ENCODE measurements at regions of chr10 and their contacts with region 1.

Region 1: DNA sequence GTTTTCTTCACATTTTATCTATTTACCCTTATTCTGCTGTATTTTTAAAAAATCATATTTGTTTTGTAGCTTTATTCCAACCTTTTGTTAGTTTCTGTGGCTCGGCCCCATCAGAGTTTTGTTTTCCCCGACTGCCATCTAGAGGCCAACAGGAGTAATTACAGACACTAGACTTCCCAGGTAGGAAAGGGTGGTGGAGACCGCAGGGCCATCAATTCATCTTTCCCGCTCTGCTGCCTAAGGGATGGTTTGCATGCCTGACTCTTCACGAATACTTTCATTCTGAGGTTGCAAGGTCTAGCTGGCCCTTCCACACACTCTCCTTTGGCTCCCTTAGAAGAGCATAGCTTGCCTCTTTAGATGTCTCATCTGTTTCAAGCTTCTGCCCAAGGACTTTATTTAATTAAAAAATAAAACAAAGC is 38.3 kb downstream of the LYZL2 start:
- DNase-seq: peak; percentile 39
- H3K4me3 Mint-ChIP-seq: no peak overlapping the region
- H3K27ac Mint-ChIP-seq: no peak overlapping the region
- H3K4me1 Mint-ChIP-seq: peaks cover 4% of the 10 kb centered on the region
- H3K27me3 Mint-ChIP-seq: peaks cover 13% of the 10 kb centered on the region

Region 2: DNA sequence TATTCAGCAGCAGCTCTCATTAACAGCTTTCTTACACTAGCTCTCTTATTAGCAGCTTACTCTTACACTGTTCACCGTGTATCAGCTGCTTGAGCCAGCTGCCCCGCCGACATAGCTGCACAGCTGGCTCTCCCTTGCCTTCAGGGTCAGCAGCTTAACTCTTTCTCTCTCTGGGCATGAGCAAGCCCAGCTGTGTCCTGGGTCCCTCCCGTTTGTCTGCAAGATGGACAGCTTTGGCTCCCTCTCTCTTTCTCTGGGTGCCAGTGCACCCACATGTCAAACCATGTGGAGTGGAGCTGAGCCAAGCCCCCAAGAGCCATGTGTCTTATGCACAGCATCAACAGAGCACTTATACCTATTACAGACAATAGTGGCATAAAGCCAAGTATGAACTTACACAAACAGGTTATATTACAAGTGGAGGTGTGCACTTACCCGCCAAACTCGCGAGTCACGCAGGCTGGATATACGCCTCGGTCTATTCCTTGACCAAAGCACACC is 206.5 kb before region 1 on chr10:
- CTCF ChIA-PET with region 1: interaction called, 125 read pairs
- POLR2A ChIA-PET with region 1: no interaction called
- DNase-seq: no peak
- H3K4me3 Mint-ChIP-seq: no peak overlapping the region
- H3K27ac Mint-ChIP-seq: no peak overlapping the region
- H3K4me1 Mint-ChIP-seq: no peaks in the 10 kb centered on the region
- H3K27me3 Mint-ChIP-seq: peaks cover 46% of the 10 kb centered on the region

Region 3: DNA sequence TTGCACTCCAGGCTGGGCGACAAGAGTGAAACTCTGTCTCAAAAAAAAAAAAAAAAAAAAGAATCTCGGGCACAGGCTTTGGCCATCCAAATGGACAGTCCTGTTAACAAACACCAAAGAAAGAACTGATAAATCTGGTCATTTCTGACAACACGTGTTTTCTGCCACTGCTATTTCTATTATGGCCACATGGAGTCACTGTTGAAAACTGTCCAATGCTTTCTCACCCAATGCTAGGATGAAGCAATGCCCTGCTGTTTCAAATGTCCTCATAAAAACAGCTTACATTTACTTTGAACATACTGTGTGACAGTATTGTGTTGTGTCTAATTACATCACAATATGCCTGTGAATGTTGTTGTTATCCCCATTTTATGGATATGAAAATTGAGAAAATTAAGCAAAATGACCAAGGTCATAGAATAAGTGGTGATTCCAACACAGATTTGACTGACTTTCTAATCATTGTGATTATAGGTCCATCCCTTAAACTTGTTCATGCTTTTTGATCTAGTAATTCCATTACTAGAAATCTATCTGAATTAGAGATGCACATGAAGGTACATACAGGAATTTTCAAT is 177.2 kb before region 1 on chr10:
- CTCF ChIA-PET with region 1: interaction called, 12 read pairs
- POLR2A ChIA-PET with region 1: no interaction called
- DNase-seq: no peak
- H3K4me3 Mint-ChIP-seq: no peak overlapping the region
- H3K27ac Mint-ChIP-seq: no peak overlapping the region
- H3K4me1 Mint-ChIP-seq: peaks cover 42% of the 10 kb centered on the region
- H3K27me3 Mint-ChIP-seq: no peaks in the 10 kb centered on the region

Region 4: DNA sequence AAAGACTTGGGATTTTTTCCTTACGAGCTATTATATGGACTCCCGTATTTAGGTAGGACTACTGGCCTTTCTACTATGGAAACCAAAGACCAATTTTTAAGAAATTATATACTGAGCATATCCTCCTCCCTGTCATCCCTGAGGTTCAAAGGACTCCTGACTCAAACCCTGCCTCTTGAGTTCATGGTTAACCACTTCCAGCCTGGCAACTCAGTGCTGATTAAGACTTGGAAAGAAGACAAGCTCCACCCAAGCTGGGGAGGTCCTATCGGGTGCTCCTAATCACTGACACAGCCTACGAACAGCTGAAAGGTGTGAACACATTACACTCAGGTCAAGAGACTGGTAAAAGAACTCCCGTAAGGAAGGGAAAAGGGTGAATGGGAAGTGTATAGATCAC is 28.5 kb before region 1 on chr10:
- CTCF ChIA-PET with region 1: interaction called, 12 read pairs
- POLR2A ChIA-PET with region 1: no interaction called
- DNase-seq: peak; percentile 66
- H3K4me3 Mint-ChIP-seq: no peak overlapping the region
- H3K27ac Mint-ChIP-seq: no peak overlapping the region
- H3K4me1 Mint-ChIP-seq: peaks cover 19% of the 10 kb centered on the region
- H3K27me3 Mint-ChIP-seq: peaks cover 29% of the 10 kb centered on the region

Region 5: GRCh38 chr10:30639946-30640786 is 48.9 kb after region 1 on chr10:
- CTCF ChIA-PET with region 1: interaction called, 20 read pairs
- POLR2A ChIA-PET with region 1: no interaction called
- DNase-seq: no peak
- H3K4me3 Mint-ChIP-seq: no peak overlapping the region
- H3K27ac Mint-ChIP-seq: no peak overlapping the region
- H3K4me1 Mint-ChIP-seq: peaks cover 20% of the 10 kb centered on the region
- H3K27me3 Mint-ChIP-seq: peaks cover 36% of the 10 kb centered on the region

Region 6: DNA sequence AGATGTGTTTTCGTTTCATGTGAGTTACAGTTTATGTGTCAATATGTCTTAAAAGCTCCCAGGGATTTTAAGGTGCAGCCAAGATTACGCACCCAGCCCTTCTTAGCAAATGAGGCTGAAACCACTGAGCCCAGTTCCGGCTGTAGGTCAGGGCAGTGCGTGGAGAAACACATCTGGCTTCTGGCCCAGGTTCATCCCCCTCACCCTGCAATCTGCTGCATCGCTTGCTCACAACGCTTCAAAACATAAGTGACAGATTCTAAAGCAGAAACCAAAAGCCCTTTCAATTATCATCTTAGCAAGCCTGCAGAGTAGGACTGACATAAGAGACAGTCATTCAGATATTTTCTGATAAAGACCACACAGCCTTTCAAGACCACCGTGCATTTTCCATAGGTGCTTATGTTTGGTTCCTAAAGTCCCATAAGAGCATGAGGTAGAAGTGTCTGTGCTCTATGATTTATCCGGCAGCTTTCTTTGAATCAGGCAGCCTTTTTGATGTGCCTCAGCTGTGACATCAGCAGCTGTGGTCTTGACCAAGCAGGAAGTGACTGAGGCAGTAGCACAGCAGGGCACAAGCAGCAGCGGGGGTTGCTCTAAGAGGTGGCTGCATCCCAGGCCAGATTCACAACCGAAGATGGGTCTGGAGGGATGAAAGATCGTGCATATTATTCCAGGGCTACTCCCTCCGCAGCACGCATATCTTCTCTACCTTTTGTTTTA is 110.4 kb after region 1 on chr10:
- CTCF ChIA-PET with region 1: no interaction called
- POLR2A ChIA-PET with region 1: no interaction called
- DNase-seq: peak; percentile 85
- H3K4me3 Mint-ChIP-seq: peak overlapping the region; percentile 82
- H3K27ac Mint-ChIP-seq: peak overlapping the region; percentile 99
- H3K4me1 Mint-ChIP-seq: peaks cover 89% of the 10 kb centered on the region
- H3K27me3 Mint-ChIP-seq: no peaks in the 10 kb centered on the region

Measured in activated CD4-positive, alpha-beta memory T cell treated with anti-CD3 and anti-CD28 coated beads, Interleukin-2, amount 10 ng/mL, durations not matched to agents 7 days and 5 days (primary cell).